ENCODE measurements at regions of chr17 and their contacts with region 1.

Region 1: GRCh38 chr17:7351665-7352501 is at the start of gene KCTD11:
- DNase-seq: peak; percentile 64 to 88 (median 68)
- H3K4me3 ChIP-seq: peak within 1 kb of the TSS; percentile 29 to 49
- H3K4me3 Mint-ChIP-seq: peak within 1 kb of the TSS; percentile 80 to 95 (median 84)
- H3K27ac ChIP-seq: peak within 1 kb of the TSS; percentile 68
- H3K27ac Mint-ChIP-seq: peak within 1 kb of the TSS; percentile 62 to 95 (median 87)
- H3K4me1 ChIP-seq: peaks cover 44% of the 10 kb centered on the region
- H3K4me1 Mint-ChIP-seq: peaks cover 21 to 61% (median 40%) of the 10 kb centered on the region in 4 donors
- H3K27me3 ChIP-seq: no peaks in the 10 kb centered on the region
- H3K27me3 Mint-ChIP-seq: no peaks in the 10 kb centered on the region
- total RNA-seq, gene KCTD11: 3.5 to 4.3 TPM

Region 2: DNA sequence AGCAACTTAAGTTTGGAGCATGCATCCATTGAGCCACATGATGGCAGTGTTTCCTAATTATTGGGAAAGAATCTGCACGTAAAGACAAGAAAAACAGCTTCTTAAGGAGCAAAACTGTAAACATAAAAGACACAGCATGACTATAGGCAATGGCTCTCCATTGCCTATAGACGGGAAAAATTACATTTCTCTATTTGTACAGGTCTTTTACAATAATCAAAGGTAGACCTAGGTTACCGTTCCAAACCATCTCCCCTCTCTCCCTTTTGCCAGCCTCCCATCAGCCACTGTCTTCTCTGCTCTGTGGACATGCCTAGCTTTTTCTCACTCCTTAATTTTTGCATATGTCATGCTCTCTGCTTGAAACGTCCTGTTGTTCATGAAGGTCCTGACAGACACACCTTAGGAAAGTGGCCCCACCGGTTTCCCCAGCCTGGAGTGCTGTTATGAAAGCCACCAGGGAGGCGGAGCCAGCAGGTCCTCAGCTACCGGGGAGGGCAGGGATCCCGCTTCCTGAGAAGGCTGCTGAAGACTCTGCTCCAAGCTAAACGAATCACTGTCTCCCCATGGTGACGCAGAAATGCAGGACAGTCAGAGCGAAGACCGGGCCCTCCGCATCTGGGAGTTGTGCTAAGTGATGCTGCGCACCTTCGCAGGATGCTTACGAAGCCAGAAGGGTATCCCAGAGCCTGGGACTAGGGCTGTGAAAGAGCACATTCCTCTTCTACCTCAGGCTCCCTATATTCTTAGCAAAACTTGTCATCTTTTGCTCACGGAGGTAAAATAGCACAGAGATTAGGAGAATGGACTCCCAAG is 305.8 kb before region 1 on chr17:
- CTCF ChIA-PET with region 1: no interaction called
- POLR2A ChIA-PET with region 1: interaction called, 3 read pairs
- intact Hi-C with region 1: loop called (anchors 1 kb)
- DNase-seq: peak; percentile 60 to 79 (median 74)
- H3K4me3 ChIP-seq: peak overlapping the region; percentile 67 to 84
- H3K4me3 Mint-ChIP-seq: peak overlapping the region; percentile 83 to 94 (median 90)
- H3K27ac ChIP-seq: peak overlapping the region; percentile 76
- H3K27ac Mint-ChIP-seq: peak overlapping the region; percentile 88 to 98 (median 95)
- H3K4me1 ChIP-seq: peaks cover 47% of the 10 kb centered on the region
- H3K4me1 Mint-ChIP-seq: peaks cover 15 to 54% (median 27%) of the 10 kb centered on the region in 4 donors
- H3K27me3 ChIP-seq: no peaks in the 10 kb centered on the region
- H3K27me3 Mint-ChIP-seq: peaks cover 2% of the 10 kb centered on the region in 2 donors

Region 3: DNA sequence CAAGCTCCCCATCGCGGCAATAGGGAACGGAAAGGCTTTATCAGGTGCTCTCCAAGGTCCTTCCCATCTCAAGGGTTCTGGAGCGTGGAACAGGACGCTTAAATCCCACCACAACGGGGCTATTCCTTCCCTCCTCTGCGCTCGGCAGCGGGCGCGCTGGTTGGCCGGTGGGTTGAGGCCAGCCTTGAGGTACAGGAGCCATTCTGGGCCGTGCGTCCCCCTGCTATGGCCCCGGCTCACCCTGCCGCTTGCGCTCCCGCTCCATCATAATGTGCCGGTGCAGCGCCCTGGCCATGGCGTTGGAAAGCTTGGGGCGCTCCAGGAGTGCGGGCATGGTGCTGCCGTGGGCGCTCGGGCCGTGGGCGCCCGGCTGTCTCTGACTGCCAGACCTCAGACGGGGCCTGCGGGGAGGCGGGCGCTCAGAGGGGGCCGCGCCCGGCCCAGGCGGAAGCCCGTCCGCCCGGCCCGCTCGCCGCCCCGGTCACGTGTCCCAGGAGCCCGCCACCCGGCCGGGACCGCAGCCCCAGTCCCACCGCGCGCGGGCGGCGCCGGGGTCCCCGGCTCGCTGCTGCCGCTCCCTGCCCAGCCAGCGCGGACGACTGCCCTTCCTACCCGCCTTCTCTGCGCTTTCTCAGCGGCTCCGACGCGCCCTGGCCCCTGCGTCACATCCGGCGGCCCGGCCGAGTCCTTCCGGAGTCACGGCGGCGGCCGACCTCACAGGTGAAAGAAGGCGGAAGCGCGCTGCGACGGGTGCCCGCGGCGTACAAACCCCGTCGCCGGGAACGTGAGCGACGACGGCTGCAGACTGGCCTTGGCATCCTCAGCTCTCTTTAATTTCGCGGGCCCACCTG is 36.9 kb before region 1 on chr17 and contains the start of gene GPS2:
- CTCF ChIA-PET with region 1: interaction called, 7 read pairs
- POLR2A ChIA-PET with region 1: interaction called, 23 read pairs
- intact Hi-C with region 1: no loop called
- DNase-seq: peak; percentile 92 to 94 (median 93)
- H3K4me3 ChIP-seq: peak within 1 kb of the TSS; percentile 68 to 76
- H3K4me3 Mint-ChIP-seq: peak within 1 kb of the TSS; percentile 83 to 97 (median 92)
- H3K27ac ChIP-seq: peak within 1 kb of the TSS; percentile 83
- H3K27ac Mint-ChIP-seq: peak within 1 kb of the TSS; percentile 92 to 98 (median 96)
- H3K4me1 ChIP-seq: peaks cover 50% of the 10 kb centered on the region
- H3K4me1 Mint-ChIP-seq: peaks cover 29 to 64% (median 44%) of the 10 kb centered on the region in 4 donors
- H3K27me3 ChIP-seq: no peaks in the 10 kb centered on the region
- H3K27me3 Mint-ChIP-seq: no peaks in the 10 kb centered on the region
- total RNA-seq, gene GPS2: 127 to 132 TPM

Region 4: DNA sequence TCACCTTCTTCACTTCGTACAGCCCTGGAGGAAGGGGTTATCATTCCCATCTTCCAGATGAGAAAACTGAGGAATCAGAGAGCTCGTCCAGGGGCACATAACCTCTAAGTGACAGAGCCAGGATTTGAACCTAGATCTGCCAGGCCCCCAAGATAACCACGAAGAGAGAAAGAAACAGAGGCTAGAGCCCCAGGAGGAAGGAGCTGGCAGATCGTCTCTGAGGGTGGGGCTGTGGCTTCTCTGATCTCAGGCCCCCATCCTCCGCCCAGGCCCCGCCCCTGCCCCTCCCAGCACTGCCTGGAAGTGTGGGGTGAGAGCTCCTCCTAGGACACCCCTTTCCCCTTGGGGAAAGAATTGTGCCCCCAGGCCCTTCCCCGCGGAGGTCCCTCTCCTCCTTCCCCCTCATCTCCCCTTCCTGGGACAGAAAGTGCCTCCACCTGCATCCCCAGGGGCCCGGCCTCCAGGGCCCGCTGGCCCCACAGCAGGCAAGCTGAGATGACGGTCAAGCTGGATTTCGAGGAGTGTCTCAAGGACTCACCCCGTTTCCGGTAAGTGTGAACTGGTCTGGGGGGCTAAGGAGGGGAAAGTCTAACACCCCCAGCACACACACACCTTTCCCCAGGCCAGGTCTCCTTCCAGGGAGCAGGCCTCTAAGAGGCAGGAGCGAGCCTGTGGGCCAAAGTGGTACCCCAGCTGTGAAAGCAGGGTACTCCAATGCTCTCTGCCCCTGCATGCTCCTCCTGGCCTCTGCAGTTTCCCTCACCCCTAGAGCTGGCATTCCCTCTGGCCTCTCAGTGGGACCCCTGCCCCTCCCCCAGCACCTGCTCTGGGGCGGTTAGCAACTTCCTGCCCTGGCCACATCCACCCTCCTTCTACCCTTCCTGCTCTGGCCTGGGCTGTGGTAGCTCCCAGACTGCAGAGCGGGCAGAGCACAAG is 15.4 kb before region 1 on chr17 and contains the start of gene ACAP1:
- CTCF ChIA-PET with region 1: interaction called, 58 read pairs
- POLR2A ChIA-PET with region 1: interaction called, 146 read pairs
- intact Hi-C with region 1: loop called (anchors 1 kb)
- DNase-seq: peak; percentile 78 to 90 (median 81)
- H3K4me3 ChIP-seq: peak within 1 kb of the TSS; percentile 94 to 98
- H3K4me3 Mint-ChIP-seq: peak within 1 kb of the TSS; percentile 88 to 99 (median 98)
- H3K27ac ChIP-seq: peak within 1 kb of the TSS; percentile 74
- H3K27ac Mint-ChIP-seq: peak within 1 kb of the TSS; percentile 89 to 99 (median 97)
- H3K4me1 ChIP-seq: peaks cover 81% of the 10 kb centered on the region
- H3K4me1 Mint-ChIP-seq: peaks cover 38 to 75% (median 56%) of the 10 kb centered on the region in 4 donors
- H3K27me3 ChIP-seq: no peaks in the 10 kb centered on the region
- H3K27me3 Mint-ChIP-seq: no peaks in the 10 kb centered on the region
- total RNA-seq, gene ACAP1: 507 to 516 TPM

Region 5: GRCh38 chr17:7383742-7384488 is 32.0 kb after region 1 on chr17:
- CTCF ChIA-PET with region 1: interaction called, 14 read pairs
- POLR2A ChIA-PET with region 1: interaction called, 29 read pairs
- intact Hi-C with region 1: no loop called
- DNase-seq: peak; percentile 82 to 87 (median 84)
- H3K4me3 ChIP-seq: peak overlapping the region; percentile 42 to 86
- H3K4me3 Mint-ChIP-seq: peak overlapping the region; percentile 80 to 87 (median 82)
- H3K27ac ChIP-seq: peak overlapping the region; percentile 72
- H3K27ac Mint-ChIP-seq: peak overlapping the region; percentile 88 to 97 (median 94)
- H3K4me1 ChIP-seq: peaks cover 16% of the 10 kb centered on the region
- H3K4me1 Mint-ChIP-seq: peaks cover 8 to 28% (median 13%) of the 10 kb centered on the region in 4 donors
- H3K27me3 ChIP-seq: peaks cover 9% of the 10 kb centered on the region
- H3K27me3 Mint-ChIP-seq: peaks cover 28 to 32% of the 10 kb centered on the region in 2 donors

Region 6: GRCh38 chr17:7502987-7503386 is 151.1 kb after region 1 on chr17:
- CTCF ChIA-PET with region 1: interaction called, 3 read pairs
- POLR2A ChIA-PET with region 1: no interaction called
- intact Hi-C with region 1: loop called (anchors 1 kb)
- DNase-seq: no peak
- H3K4me3 ChIP-seq: no peak overlapping the region
- H3K4me3 Mint-ChIP-seq: no peak overlapping the region
- H3K27ac ChIP-seq: no peak overlapping the region
- H3K27ac Mint-ChIP-seq: peak overlapping the region in 3 of 7 donors; percentile 46 to 80 (median 50)
- H3K4me1 ChIP-seq: no peaks in the 10 kb centered on the region
- H3K4me1 Mint-ChIP-seq: peaks cover 0 to 2% (median 0%) of the 10 kb centered on the region in 4 donors
- H3K27me3 ChIP-seq: no peaks in the 10 kb centered on the region
- H3K27me3 Mint-ChIP-seq: no peaks in the 10 kb centered on the region

Region 7: DNA sequence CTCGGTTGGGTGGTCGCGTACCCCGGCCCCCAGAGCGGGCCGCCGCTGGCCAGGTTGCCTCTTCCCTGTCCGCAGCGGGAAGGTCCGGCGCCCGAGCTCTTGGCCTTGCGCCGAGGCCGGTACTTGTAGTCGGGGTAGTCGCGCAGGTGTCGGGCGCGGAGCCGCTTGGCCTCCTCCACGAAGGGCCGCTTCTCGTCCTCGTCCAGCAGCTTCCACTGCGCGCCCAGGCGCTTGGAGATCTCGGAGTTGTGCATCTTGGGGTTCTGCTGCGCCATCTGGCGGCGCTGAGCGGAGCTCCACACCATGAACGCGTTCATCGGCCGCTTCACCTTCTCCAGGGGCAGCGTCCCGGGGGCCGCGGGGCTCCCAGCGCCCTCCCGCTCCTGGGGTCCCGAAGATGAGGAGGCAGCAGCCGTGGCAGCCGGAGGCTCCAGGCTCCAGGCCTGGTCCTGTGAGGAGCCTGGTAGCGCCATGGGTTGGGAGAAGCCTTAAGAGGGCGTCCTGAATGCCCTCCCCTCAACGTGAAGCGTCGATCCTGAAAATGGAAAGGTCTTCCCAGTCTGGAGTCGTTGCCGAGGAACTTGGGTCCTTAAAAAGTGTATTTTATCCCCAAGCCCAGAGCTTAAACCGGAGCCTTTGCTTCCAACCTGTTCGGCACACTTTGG is 237.5 kb after region 1 on chr17:
- CTCF ChIA-PET with region 1: interaction called, 12 read pairs
- POLR2A ChIA-PET with region 1: interaction called, 7 read pairs
- intact Hi-C with region 1: no loop called
- DNase-seq: peak; percentile 57 to 65 (median 60)
- H3K4me3 ChIP-seq: no peak overlapping the region
- H3K4me3 Mint-ChIP-seq: no peak overlapping the region
- H3K27ac ChIP-seq: no peak overlapping the region
- H3K27ac Mint-ChIP-seq: no peak overlapping the region
- H3K4me1 ChIP-seq: peaks cover 24% of the 10 kb centered on the region
- H3K4me1 Mint-ChIP-seq: peaks cover 5 to 22% (median 11%) of the 10 kb centered on the region in 4 donors
- H3K27me3 ChIP-seq: no peaks in the 10 kb centered on the region
- H3K27me3 Mint-ChIP-seq: no peaks in the 10 kb centered on the region

Measured in CD4-positive, alpha-beta memory T cell (primary cell).